CD4-positive, alpha-beta memory T cell (primary cell): ENCODE measurements at regions of chr17 and their contacts with region 1.

Region 1: DNA sequence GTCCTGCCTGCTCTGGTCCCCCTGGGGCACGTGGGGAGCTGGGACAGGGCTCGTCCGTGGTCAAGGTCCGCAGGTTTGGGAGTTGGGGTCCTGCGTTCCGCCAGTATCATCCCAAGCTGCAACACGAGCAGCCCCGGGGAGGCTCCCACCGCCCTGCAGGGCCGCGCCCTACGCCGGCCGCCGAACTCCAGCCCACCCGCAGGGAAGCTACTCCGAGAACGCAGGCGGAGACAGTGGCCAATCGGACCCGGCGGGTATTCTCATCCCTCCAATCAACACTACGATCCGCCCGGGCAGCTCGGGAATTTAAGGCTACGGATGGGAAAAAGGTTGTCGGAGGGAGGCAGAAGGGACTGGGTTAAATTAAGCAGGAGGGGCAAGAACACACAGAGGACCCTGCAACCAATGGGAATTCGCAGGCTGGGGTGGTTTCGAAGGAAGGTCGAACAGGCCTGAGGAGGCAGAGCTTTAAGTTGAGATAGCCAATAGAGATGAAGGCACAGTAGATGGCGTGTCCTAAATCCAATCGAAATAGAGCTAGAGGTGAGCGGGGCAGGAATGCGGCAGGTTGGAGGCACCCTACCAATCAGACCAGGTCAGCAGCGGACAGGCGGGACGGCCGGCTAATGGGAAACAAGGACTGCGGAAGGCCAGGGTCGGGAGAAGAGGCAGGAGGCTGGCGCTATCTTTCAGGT is 626 bp downstream of the SPAG7 start:
- DNase-seq: peak; percentile 96 to 99 (median 98)
- H3K4me3 ChIP-seq: peak overlapping the region; percentile 64 to 95
- H3K4me3 Mint-ChIP-seq: peak overlapping the region in 1 of 8 donors; percentile 56
- H3K27ac ChIP-seq: peak overlapping the region; percentile 81
- H3K27ac Mint-ChIP-seq: peak overlapping the region in 2 of 7 donors; percentile 81 to 85
- H3K4me1 ChIP-seq: peaks cover 28% of the 10 kb centered on the region
- H3K4me1 Mint-ChIP-seq: peaks cover 16 to 27% (median 24%) of the 10 kb centered on the region in 4 donors
- H3K27me3 ChIP-seq: no peaks in the 10 kb centered on the region
- H3K27me3 Mint-ChIP-seq: no peaks in the 10 kb centered on the region

Region 2: GRCh38 chr17:4709794-4710692 is 256.9 kb before region 1 on chr17 and contains the start of gene ARRB2:
- CTCF ChIA-PET with region 1: no interaction called
- POLR2A ChIA-PET with region 1: interaction called, 7 read pairs
- intact Hi-C with region 1: loop called (anchors 1 kb)
- DNase-seq: peak; percentile 98 to 99 (median 99)
- H3K4me3 ChIP-seq: peak within 1 kb of the TSS; percentile 85 to 89
- H3K4me3 Mint-ChIP-seq: peak within 1 kb of the TSS; percentile 85 to 98 (median 96)
- H3K27ac ChIP-seq: peak within 1 kb of the TSS; percentile 79
- H3K27ac Mint-ChIP-seq: peak within 1 kb of the TSS; percentile 86 to 98 (median 91)
- H3K4me1 ChIP-seq: peaks cover 40% of the 10 kb centered on the region
- H3K4me1 Mint-ChIP-seq: peaks cover 34 to 72% (median 45%) of the 10 kb centered on the region in 4 donors
- H3K27me3 ChIP-seq: no peaks in the 10 kb centered on the region
- H3K27me3 Mint-ChIP-seq: no peaks in the 10 kb centered on the region
- total RNA-seq, gene ARRB2: 340 to 341 TPM

Region 3: GRCh38 chr17:4903051-4903818 is 63.8 kb before region 1 on chr17 and contains the start of gene CHRNE:
- CTCF ChIA-PET with region 1: interaction called, 24 read pairs
- POLR2A ChIA-PET with region 1: interaction called, 46 read pairs
- intact Hi-C with region 1: no loop called
- DNase-seq: peak; percentile 75 to 87 (median 79)
- H3K4me3 ChIP-seq: no peak within 1 kb of the TSS
- H3K4me3 Mint-ChIP-seq: peak within 1 kb of the TSS; percentile 24 to 80 (median 69)
- H3K27ac ChIP-seq: no peak within 1 kb of the TSS
- H3K27ac Mint-ChIP-seq: peak within 1 kb of the TSS; percentile 83 to 94 (median 90)
- H3K4me1 ChIP-seq: peaks cover 41% of the 10 kb centered on the region
- H3K4me1 Mint-ChIP-seq: peaks cover 19 to 45% (median 37%) of the 10 kb centered on the region in 4 donors
- H3K27me3 ChIP-seq: no peaks in the 10 kb centered on the region
- H3K27me3 Mint-ChIP-seq: peaks cover 0 to 2% of the 10 kb centered on the region in 2 donors
- total RNA-seq, gene CHRNE: 0.64 to 1.3 TPM

Region 4: GRCh38 chr17:4939796-4940624 is 27.0 kb before region 1 on chr17 and contains the starts of genes RNF167 and SLC25A11:
- CTCF ChIA-PET with region 1: interaction called, 19 read pairs
- POLR2A ChIA-PET with region 1: interaction called, 973 read pairs
- intact Hi-C with region 1: loop called (anchors 1 kb)
- DNase-seq: peak; percentile 96 to 99 (median 99)
- H3K4me3 ChIP-seq: peak within 1 kb of the TSS; percentile 99
- H3K4me3 Mint-ChIP-seq: peak within 1 kb of the TSS; percentile 95 to 100 (median 98)
- H3K27ac ChIP-seq: peak within 1 kb of the TSS; percentile 81
- H3K27ac Mint-ChIP-seq: peak within 1 kb of the TSS; percentile 92 to 100 (median 98)
- H3K4me1 ChIP-seq: peaks cover 57% of the 10 kb centered on the region
- H3K4me1 Mint-ChIP-seq: peaks cover 43 to 72% (median 55%) of the 10 kb centered on the region in 4 donors
- H3K27me3 ChIP-seq: no peaks in the 10 kb centered on the region
- H3K27me3 Mint-ChIP-seq: no peaks in the 10 kb centered on the region
- total RNA-seq, gene RNF167: 154 to 172 TPM
- total RNA-seq, gene SLC25A11: 43.5 to 49.5 TPM

Region 5: DNA sequence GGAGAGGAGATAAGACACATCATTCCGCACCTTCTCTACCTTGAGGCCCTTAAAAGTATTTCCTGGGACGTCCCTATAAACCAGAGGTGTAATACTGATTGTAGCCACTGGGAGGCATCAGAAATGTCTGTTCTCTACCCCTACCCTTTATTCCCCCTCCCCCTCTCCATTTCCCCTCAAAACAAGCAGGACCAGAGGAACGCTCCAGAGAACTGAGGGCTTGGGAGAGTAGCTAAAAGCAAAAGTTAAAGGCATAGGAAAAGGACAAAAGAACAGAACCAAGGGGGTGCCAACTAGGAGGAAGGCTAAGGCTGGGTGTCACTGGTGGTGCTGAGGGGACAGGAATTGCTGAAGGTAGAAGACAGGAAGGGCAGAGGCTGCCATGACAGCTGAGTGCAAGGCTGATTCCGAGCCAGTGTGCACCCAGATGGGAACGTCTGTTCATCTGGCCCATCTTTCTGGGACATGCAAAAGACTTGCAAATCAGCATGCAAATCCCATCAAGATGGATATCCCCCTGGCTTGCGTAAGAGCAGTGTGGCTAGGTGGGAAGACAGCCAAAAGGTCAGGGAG is 13.7 kb after region 1 on chr17:
- CTCF ChIA-PET with region 1: interaction called, 20 read pairs
- POLR2A ChIA-PET with region 1: interaction called, 79 read pairs
- intact Hi-C with region 1: loop called (anchors 1 kb)
- DNase-seq: peak; percentile 62 to 73 (median 67)
- H3K4me3 ChIP-seq: no peak overlapping the region
- H3K4me3 Mint-ChIP-seq: peak overlapping the region in 5 of 8 donors; percentile 8 to 65 (median 22)
- H3K27ac ChIP-seq: no peak overlapping the region
- H3K27ac Mint-ChIP-seq: peak overlapping the region; percentile 34 to 94 (median 80)
- H3K4me1 ChIP-seq: peaks cover 15% of the 10 kb centered on the region
- H3K4me1 Mint-ChIP-seq: peaks cover 17 to 36% (median 22%) of the 10 kb centered on the region in 4 donors
- H3K27me3 ChIP-seq: no peaks in the 10 kb centered on the region
- H3K27me3 Mint-ChIP-seq: no peaks in the 10 kb centered on the region

Region 6: GRCh38 chr17:5049314-5049895 is 82.4 kb after region 1 on chr17:
- CTCF ChIA-PET with region 1: interaction called, 3 read pairs
- POLR2A ChIA-PET with region 1: interaction called, 16 read pairs
- intact Hi-C with region 1: no loop called
- DNase-seq: peak; percentile 79 to 89 (median 85)
- H3K4me3 ChIP-seq: no peak overlapping the region
- H3K4me3 Mint-ChIP-seq: peak overlapping the region in 7 of 8 donors; percentile 61 to 89 (median 74)
- H3K27ac ChIP-seq: peak overlapping the region; percentile 42
- H3K27ac Mint-ChIP-seq: peak overlapping the region; percentile 93 to 98 (median 95)
- H3K4me1 ChIP-seq: peaks cover 60% of the 10 kb centered on the region
- H3K4me1 Mint-ChIP-seq: peaks cover 32 to 60% (median 47%) of the 10 kb centered on the region in 4 donors
- H3K27me3 ChIP-seq: no peaks in the 10 kb centered on the region
- H3K27me3 Mint-ChIP-seq: no peaks in the 10 kb centered on the region